BJ (cell line): ENCODE measurements at regions of chr17 and their contacts with region 1.

Region 1: DNA sequence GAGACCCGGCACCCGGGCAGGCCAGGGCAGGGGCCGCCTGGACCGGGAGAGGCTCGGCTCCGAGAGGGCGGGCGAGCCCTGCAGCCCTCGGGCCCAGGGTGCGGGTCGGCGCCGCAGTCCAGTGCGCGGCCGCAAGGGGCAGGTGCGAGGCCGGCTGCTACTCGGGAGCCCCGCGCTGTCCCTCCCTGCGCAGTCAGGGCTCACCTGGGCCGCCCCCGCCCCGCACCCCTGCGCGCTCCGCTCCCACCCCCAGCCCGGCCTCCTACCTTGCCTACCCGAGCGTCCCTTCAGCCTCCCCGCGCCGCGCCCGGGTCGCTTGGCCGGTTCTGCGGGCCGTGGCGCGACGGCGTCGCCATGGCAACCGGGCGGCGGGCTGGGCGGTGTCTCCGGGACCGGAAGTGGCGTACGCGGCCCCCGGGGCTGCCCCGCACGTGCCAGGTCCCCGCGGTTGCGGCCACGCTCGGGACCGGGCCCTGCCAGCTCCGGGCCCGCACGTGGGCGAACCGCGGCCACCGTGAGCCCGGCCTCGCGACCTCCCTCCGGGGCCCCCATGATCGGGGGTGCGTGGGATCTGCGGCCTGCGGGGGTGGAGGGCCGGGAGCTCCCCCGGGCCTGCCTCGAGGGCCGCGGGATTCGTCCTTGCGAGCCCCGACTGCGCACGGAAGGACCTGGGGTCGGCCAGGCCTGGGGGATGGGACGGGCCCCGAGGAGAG is at the start of gene CYB561:
- DNase-seq: no peak
- H3K4me3 ChIP-seq: peak within 1 kb of the TSS; percentile 45
- H3K27me3 ChIP-seq: no peaks in the 10 kb centered on the region
- CTCF ChIP-seq: peak; percentile 17; the same call in 1 of the 2 replicates
- polyA plus RNA-seq, gene CYB561: 13.0 and 17.1 TPM in 2 replicates

Region 2: DNA sequence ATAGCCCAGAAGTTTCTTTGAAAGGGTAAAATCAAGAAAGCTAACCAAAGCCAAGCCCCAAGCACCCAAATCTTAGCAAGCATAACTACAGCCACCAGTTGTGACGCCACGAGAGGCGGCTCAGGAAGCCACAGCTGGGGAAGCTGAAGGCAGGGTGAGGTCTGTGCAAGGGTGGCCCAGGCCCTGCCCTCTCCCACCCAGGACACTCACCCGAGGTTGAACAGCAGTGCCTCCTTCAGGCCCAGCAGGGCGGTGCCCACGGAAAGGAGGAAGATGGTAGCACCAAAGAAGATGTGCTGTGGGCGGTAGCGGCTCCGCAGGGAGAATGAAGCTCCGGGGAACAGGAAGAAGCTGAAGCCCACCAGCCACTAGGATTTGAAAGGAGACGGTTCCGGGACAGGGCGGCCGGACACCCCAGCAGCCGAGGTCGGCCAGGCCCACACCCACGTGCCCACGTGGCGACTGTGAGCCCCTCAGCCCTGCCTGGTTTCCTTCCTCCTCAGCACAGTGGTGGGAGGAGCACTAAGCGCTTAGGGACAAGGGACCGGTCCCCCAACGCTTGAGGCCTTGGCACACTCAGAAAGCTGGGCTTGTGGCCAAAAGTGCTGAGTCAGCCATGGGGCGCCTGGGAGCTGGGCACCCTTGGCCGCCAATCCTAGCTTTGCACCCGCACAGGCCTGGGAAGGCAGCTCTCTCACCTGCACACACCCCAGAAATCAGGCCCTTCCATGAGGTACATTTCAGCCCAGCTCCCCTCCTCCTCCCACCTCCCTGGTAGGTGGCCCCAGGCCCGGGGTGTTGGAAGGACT is 11.1 kb before region 1 on chr17:
- CTCF ChIA-PET with region 1: interaction called, 12 read pairs
- POLR2A ChIA-PET with region 1: no interaction called
- DNase-seq: no peak
- H3K4me3 ChIP-seq: no peak overlapping the region
- H3K27me3 ChIP-seq: no peaks in the 10 kb centered on the region
- CTCF ChIP-seq: 0 out of 2 replicates have a peak, but pooled peaks have one; percentile 14

Region 3: GRCh38 chr17:63464691-63465236 is 18.6 kb after region 1 on chr17:
- CTCF ChIA-PET with region 1: no interaction called
- POLR2A ChIA-PET with region 1: interaction called, 22 read pairs
- DNase-seq: no peak
- H3K4me3 ChIP-seq: no peak overlapping the region
- H3K27me3 ChIP-seq: no peaks in the 10 kb centered on the region
- CTCF ChIP-seq: no peak